ENCODE measurements at regions of chr1 and their contacts with region 1.

Region 1: DNA sequence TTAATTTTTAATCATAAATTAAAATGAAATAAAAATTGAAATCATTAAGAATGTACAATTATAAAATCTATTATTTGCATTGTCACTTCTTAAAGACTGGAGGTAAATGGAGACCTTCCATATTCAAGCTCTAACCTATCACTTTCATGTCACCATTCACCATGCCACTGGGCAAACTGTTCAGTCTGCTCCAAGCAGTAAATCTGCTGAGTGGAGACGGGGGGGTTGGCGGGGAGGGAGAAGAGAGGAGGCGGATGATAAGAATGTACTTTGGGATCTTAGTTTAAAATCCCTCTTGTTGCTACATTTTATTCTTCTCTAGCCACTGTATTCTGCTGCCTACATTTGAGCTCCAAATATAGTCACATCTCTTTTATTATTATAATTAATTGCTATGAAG is 365.9 kb upstream of the NFIA start:
- DNase-seq: no peak
- ATAC-seq: no peak
- H3K4me3 ChIP-seq: no peak overlapping the region
- H3K4me3 Mint-ChIP-seq: no peak overlapping the region
- H3K27ac ChIP-seq: no peak overlapping the region
- H3K27ac Mint-ChIP-seq: no peak overlapping the region
- H3K4me1 ChIP-seq: no peaks in the 10 kb centered on the region
- H3K4me1 Mint-ChIP-seq: no peaks in the 10 kb centered on the region
- H3K27me3 ChIP-seq: no peaks in the 10 kb centered on the region
- H3K27me3 Mint-ChIP-seq: no peaks in the 10 kb centered on the region
- CTCF ChIP-seq: no peak

Region 2: GRCh38 chr1:59232216-59232615 is 1484.3 kb before region 1 on chr1:
- CTCF ChIA-PET with region 1: no interaction called
- POLR2A ChIA-PET with region 1: no interaction called
- intact Hi-C with region 1: loop called in 1 of 2 experiments (anchors 10 kb)
- DNase-seq: no peak
- ATAC-seq: no peak
- H3K4me3 ChIP-seq: no peak overlapping the region
- H3K4me3 Mint-ChIP-seq: no peak overlapping the region
- H3K27ac ChIP-seq: no peak overlapping the region
- H3K27ac Mint-ChIP-seq: no peak overlapping the region
- H3K4me1 ChIP-seq: no peaks in the 10 kb centered on the region
- H3K4me1 Mint-ChIP-seq: no peaks in the 10 kb centered on the region
- H3K27me3 ChIP-seq: no peaks in the 10 kb centered on the region
- H3K27me3 Mint-ChIP-seq: no peaks in the 10 kb centered on the region
- CTCF ChIP-seq: no peak

Region 3: DNA sequence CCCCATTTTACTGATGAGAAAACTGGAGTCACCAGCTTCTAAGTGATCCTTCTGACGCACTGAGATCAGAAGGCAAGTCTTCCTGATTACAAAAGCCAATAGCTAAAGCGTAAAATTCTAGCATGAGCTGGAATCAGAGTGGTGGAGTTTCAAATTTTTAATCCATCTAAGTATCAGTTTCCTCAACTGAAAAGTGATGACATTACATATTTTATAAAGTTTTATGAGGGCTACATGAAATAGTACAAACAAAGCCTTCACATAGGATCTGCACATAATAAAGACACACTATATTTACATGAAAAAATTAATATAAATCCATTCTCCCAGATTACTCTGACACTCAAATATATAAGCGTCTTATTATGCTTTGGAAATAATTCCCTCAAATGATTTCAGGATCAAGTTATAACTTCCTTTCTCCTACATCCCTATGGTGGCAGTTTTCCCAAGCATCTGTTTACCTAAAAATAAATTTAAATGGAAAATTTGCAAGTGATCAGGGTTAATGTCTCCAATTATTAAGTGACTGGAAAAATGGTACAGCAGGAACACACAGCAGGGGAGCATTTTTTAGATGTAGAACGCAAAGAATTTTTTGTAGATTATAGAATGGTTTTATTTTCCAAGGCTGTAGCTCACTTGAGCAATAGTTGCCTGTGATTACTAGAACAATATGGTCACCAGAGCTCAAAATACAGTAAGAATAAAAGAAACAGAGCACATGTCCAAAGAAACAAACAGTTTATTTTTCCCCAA is 152.5 kb before region 1 on chr1:
- CTCF ChIA-PET with region 1: no interaction called
- POLR2A ChIA-PET with region 1: no interaction called
- intact Hi-C with region 1: no loop called
- DNase-seq: no peak
- ATAC-seq: no peak
- H3K4me3 ChIP-seq: no peak overlapping the region
- H3K4me3 Mint-ChIP-seq: no peak overlapping the region
- H3K27ac ChIP-seq: no peak overlapping the region
- H3K27ac Mint-ChIP-seq: no peak overlapping the region
- H3K4me1 ChIP-seq: no peaks in the 10 kb centered on the region
- H3K4me1 Mint-ChIP-seq: no peaks in the 10 kb centered on the region
- H3K27me3 ChIP-seq: no peaks in the 10 kb centered on the region
- H3K27me3 Mint-ChIP-seq: peaks cover 2% of the 10 kb centered on the region
- CTCF ChIP-seq: no peak

Region 4: DNA sequence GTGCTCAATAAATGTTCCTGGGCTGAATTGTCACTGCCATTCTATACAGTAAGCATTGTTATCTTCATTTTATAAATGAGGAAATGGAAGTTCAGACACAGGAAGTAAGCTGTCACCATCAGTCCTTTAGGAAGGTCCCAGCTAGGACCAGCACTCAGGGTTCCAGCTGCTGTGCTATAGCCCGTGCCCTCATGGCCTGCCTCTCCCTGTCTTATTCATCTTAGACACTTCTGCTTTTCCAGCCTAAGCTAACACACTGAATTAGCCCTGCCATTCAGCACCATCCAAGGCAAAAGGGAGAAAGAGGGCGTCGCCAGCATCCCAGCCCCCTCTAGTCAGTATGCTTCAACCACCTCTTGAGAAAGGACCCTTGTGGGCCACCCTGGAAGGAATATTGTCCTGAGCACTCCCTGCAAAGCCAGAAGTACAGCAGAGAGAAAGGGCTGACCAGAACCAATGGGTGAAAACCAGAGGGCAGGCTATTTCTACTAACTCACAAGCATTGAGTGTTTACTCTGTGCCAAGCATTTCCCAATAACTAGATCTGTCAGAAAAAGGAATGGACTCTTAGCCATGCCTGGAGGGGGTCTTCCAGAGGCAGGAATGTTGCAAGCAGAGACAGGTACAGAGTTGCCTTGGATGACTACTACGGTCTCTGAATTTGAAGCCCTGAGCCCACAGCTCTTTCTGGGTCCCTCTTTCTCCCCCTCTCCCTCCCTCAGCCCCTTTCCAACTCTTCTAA is 288.0 kb after region 1 on chr1:
- CTCF ChIA-PET with region 1: no interaction called
- POLR2A ChIA-PET with region 1: no interaction called
- intact Hi-C with region 1: no loop called
- DNase-seq: no peak
- ATAC-seq: no peak
- H3K4me3 ChIP-seq: no peak overlapping the region
- H3K4me3 Mint-ChIP-seq: no peak overlapping the region
- H3K27ac ChIP-seq: no peak overlapping the region
- H3K27ac Mint-ChIP-seq: no peak overlapping the region
- H3K4me1 ChIP-seq: no peaks in the 10 kb centered on the region
- H3K4me1 Mint-ChIP-seq: no peaks in the 10 kb centered on the region
- H3K27me3 ChIP-seq: no peaks in the 10 kb centered on the region
- H3K27me3 Mint-ChIP-seq: no peaks in the 10 kb centered on the region
- CTCF ChIP-seq: no peak

Region 5: DNA sequence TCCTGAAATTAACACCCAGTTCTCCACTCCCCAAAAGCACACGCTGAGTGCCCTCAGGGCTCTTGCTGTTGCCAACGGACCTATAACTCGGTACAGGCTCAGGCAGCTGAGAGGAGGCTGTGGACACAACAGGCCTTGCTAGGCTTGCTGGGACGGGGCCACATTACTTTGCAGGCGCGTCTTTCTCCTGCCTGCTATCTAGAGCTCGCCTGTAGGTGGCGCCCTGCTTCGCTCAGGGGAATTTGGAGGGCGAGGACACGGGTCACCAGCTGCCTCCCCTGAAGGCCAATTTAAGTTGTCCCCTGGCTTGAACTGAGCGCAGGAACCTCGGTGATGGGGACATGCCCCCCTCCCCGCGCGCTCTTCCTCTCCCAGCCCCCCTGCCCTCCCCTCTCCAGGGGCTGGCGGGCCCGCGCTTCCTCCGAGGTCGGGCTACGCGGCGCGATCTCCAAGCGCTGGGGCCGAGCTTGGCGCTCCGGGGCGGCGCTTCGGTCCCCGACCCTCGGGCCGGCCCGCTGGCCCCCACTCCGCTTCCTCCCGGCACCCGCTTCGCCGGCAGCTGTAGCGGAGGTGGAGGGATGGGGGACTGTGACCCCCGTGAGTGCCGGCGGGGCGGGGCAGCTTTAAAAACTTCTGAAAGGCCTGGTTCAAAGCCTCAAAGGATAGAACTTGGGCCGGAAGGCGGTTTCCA is 333.5 kb after region 1 on chr1:
- CTCF ChIA-PET with region 1: no interaction called
- POLR2A ChIA-PET with region 1: no interaction called
- intact Hi-C with region 1: no loop called
- DNase-seq: peak; percentile 81 to 94 (median 88)
- ATAC-seq: peak; percentile 79
- H3K4me3 ChIP-seq: peak overlapping the region; percentile 65 to 73
- H3K4me3 Mint-ChIP-seq: peak overlapping the region; percentile 84
- H3K27ac ChIP-seq: no peak overlapping the region
- H3K27ac Mint-ChIP-seq: no peak overlapping the region
- H3K4me1 ChIP-seq: peaks cover 22% of the 10 kb centered on the region
- H3K4me1 Mint-ChIP-seq: peaks cover 28% of the 10 kb centered on the region
- H3K27me3 ChIP-seq: peaks cover 0 to 6% of the 10 kb centered on the region in 2 experiments
- H3K27me3 Mint-ChIP-seq: peaks cover 31% of the 10 kb centered on the region
- CTCF ChIP-seq: peak; percentile 86

Measured in CD8-positive, alpha-beta T cell (primary cell).